H1 (cell line): ENCODE measurements at regions of chr14 and their contacts with region 1.

Region 1: GRCh38 chr14:66662374-66662773 is 154.4 kb downstream of the GPHN start:
- DNase-seq: no peak
- H3K4me3 ChIP-seq: no peak overlapping the region
- H3K27ac ChIP-seq: no peak overlapping the region
- H3K4me1 ChIP-seq: no peaks in the 10 kb centered on the region
- H3K27me3 ChIP-seq: no peaks in the 10 kb centered on the region
- CTCF ChIP-seq: peak; percentile 31 to 66 (median 62)
- EP300 ChIP-seq: no peak
- POLR2A ChIP-seq: no peak
- RAD21 ChIP-seq: peak; percentile 66 to 76

Region 2: DNA sequence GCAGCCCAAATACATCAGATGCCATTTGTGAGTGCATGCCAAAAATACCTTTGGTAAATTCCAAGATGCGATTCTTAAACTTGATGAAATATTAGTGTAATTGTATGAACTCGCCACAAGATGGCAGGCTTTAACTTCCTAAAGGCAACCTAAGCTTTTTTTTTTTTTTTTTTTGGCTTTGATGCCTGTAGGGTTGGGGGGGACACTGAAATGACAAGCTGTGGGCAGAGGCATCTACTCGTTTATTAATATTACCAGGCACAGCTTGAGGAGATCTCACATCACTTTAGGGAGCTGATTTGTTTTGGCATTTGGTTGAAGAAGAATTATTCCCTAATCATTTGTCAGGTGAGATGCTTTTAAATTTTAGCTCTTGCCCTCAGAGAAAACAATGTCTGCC is 302.9 kb before region 1 on chr14:
- CTCF ChIA-PET with region 1: interaction called, 18 read pairs
- POLR2A ChIA-PET with region 1: no interaction called
- DNase-seq: no peak
- H3K4me3 ChIP-seq: no peak overlapping the region
- H3K27ac ChIP-seq: no peak overlapping the region
- H3K4me1 ChIP-seq: peaks cover 0 to 6% (median 0%) of the 10 kb centered on the region in 4 experiments; a peak in 3 of 7 replicates
- H3K27me3 ChIP-seq: no peaks in the 10 kb centered on the region
- CTCF ChIP-seq: peak in 2 of 3 experiments; percentile 52 to 53; a peak in 2 of 4 replicates
- EP300 ChIP-seq: no peak
- POLR2A ChIP-seq: no peak
- RAD21 ChIP-seq: peak; percentile 86

Region 3: DNA sequence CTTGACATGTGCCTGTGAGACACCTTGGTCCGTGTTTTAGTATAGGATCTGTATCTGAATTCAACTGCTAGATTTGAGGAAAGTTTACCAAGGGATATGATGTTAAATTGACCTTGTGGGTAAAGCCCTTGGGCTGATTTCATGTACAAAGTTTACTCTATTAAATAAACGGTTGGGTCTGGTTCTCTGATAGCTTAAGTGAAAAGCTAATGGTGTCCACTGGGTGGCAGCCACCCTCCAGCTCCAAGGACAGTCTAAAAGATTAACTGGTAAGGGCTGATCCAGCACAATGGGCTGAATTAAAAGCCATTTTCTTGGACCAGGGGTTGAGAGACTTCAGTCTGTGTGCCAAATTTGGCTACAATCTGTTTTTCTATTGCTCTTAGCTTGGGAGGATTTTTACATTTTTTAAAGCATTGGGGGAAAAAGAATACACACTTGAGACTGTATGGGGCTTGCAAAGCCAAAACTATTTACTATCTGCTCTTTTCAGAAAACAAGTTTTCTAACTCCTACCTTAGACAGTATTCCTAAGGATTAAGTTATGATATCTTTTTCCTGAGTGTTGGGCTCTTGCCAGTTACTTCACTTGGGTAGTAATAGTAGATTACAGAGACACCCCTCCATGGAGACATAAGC is 38.0 kb before region 1 on chr14:
- CTCF ChIA-PET with region 1: interaction called, 31 read pairs
- POLR2A ChIA-PET with region 1: no interaction called
- DNase-seq: peak in 1 of 2 experiments; percentile 23
- H3K4me3 ChIP-seq: no peak overlapping the region
- H3K27ac ChIP-seq: no peak overlapping the region
- H3K4me1 ChIP-seq: no peaks in the 10 kb centered on the region
- H3K27me3 ChIP-seq: no peaks in the 10 kb centered on the region
- CTCF ChIP-seq: peak; percentile 16 to 71 (median 63)
- EP300 ChIP-seq: no peak
- POLR2A ChIP-seq: no peak
- RAD21 ChIP-seq: peak; percentile 85 to 86

Region 4: DNA sequence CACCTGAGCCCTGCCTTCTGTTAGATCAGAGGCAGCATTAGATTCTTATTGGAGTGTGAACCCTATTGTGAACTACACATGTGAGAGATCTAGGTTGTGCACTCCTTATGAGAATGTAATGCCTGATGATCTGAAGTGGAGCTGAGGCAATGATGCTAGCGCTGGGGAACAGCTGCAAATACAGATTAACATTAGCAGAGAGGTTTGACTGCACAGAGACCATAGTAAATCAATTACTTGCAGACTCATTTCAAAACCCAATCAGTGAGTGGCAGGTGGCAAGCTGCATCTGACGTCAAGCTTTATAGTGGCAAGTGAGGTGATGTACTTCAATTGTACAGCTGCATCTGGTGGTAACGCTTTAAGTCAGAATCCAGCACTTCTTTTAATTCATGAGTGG is 12.9 kb before region 1 on chr14:
- CTCF ChIA-PET with region 1: interaction called, 13 read pairs
- POLR2A ChIA-PET with region 1: no interaction called
- DNase-seq: no peak
- H3K4me3 ChIP-seq: no peak overlapping the region
- H3K27ac ChIP-seq: no peak overlapping the region
- H3K4me1 ChIP-seq: peaks cover 0 to 8% (median 3%) of the 10 kb centered on the region in 4 experiments; a peak in 4 of 7 replicates
- H3K27me3 ChIP-seq: no peaks in the 10 kb centered on the region
- CTCF ChIP-seq: no peak
- EP300 ChIP-seq: no peak
- POLR2A ChIP-seq: no peak
- RAD21 ChIP-seq: no peak